T-cell (primary cell): ENCODE measurements at regions of chr3 and their contacts with region 1.

Region 1: DNA sequence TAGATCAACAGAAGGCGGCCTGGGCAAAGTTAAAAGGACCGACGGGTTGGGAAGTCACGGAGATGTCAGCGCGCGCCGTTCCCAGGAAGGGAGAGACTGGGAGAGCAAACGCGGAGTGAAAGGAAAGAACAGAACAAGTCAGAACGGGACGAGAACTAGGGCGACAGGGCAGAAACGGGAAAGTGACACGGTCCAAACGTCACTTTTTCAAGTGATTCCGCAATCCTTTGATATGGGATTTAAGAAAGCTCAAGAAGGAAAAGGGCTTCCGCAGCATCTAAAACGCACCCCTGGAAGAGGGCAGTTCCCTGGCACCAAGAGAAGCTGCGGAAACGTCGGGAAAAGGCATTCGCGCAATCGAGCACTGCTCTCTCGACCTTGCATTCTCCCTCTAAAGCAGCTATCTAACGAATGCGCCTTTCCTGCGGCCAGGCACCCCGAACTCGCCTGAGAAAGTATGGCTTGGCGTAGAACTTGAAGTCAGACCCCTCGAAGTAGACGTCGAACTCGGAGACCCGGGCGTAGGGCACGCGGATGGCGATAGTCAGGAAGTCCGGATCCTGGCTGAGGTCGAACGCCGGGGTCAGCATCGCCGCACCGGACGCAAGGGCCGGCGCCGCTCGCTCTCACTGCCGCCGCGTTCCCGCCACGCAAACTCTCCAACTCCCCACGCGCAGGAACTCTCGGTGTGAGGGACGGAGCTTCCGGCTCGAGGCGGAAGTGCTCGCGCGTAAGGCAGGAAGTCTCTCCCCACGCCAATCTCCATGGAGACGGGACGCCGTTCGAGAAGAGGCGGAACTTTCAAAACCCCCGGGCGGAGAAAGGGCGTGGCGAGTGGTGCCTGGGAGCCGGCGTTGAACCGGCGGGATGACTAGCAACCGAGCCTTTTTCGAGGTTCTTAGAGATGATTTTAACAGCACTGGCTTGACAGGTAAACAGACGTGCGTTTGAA is at the start of gene SHQ1:
- DNase-seq: peak; percentile 87 to 97 (median 92)
- ATAC-seq: peak; percentile 92 to 97 (median 96)
- H3K4me3 ChIP-seq: peak within 1 kb of the TSS; percentile 92 to 98
- H3K4me3 Mint-ChIP-seq: peak within 1 kb of the TSS; percentile 93 to 97 (median 95)
- H3K27ac ChIP-seq: peak within 1 kb of the TSS; percentile 52
- H3K27ac Mint-ChIP-seq: peak within 1 kb of the TSS; percentile 86 to 87
- H3K4me1 ChIP-seq: peaks cover 17 to 19% of the 10 kb centered on the region in 2 experiments
- H3K4me1 Mint-ChIP-seq: peaks cover 52 to 57% (median 54%) of the 10 kb centered on the region in 3 donors
- H3K27me3 ChIP-seq: no peaks in the 10 kb centered on the region
- H3K27me3 Mint-ChIP-seq: no peaks in the 10 kb centered on the region
- total RNA-seq, gene SHQ1: 16.6 to 29.0 (median 27.8) TPM

Region 2: DNA sequence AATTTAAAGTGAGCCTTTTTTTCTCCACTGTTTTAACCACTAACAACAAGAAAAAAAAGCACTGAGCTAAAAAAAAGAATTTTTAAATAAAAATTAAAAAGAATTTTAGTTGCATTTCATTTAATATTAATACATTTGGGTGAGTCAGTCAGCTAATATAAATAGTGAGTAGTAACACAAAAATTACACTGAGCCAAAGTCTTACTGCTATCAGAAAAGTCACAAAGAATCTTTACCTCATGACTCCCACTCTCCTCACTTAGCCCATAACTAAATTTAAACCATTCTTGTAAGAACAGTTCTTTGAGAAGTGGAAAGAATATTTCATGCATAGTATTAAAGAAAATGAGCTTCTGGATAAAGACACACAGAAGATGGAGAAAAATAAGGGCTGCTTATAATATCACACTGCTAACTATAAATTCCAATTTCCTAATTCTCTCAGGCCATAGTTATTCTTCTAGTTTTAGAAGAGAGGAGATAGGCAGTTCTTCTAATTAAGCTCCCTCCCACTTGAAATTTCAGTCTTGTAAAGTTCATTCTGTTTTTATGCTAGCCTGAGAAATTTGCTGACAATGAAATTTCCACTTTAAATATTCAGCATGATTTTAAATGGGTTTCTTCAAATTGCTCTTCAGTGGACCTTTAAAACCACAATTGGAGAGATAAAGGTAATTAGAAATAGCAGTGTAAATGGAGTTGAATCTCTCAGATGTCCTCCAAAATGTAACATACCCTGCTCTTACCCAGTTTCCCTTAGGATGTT is 17.4 kb before region 1 on chr3:
- CTCF ChIA-PET with region 1: interaction called in 1 of 2 experiments, 3 read pairs
- POLR2A ChIA-PET with region 1: interaction called in 1 of 2 experiments, 14 read pairs
- DNase-seq: no peak
- ATAC-seq: no peak
- H3K4me3 ChIP-seq: no peak overlapping the region
- H3K4me3 Mint-ChIP-seq: no peak overlapping the region
- H3K27ac ChIP-seq: no peak overlapping the region
- H3K27ac Mint-ChIP-seq: no peak overlapping the region
- H3K4me1 ChIP-seq: no peaks in the 10 kb centered on the region
- H3K4me1 Mint-ChIP-seq: peaks cover 0 to 4% (median 1%) of the 10 kb centered on the region in 3 donors
- H3K27me3 ChIP-seq: no peaks in the 10 kb centered on the region
- H3K27me3 Mint-ChIP-seq: no peaks in the 10 kb centered on the region

Region 3: GRCh38 chr3:73086071-73086494 is 238.1 kb after region 1 on chr3:
- CTCF ChIA-PET with region 1: interaction called, 11 to 23 read pairs
- POLR2A ChIA-PET with region 1: no interaction called
- DNase-seq: peak in 28 of 35 experiments; percentile 7 to 72 (median 36)
- ATAC-seq: peak; percentile 57 to 73 (median 66)
- H3K4me3 ChIP-seq: peak overlapping the region in 1 of 2 donors; percentile 17
- H3K4me3 Mint-ChIP-seq: peak overlapping the region in 2 of 3 donors; percentile 26 to 35
- H3K27ac ChIP-seq: no peak overlapping the region
- H3K27ac Mint-ChIP-seq: peak overlapping the region; percentile 9 to 23
- H3K4me1 ChIP-seq: no peaks in the 10 kb centered on the region
- H3K4me1 Mint-ChIP-seq: peaks cover 7 to 9% (median 8%) of the 10 kb centered on the region in 3 donors
- H3K27me3 ChIP-seq: peaks cover 0 to 2% of the 10 kb centered on the region in 2 experiments
- H3K27me3 Mint-ChIP-seq: no peaks in the 10 kb centered on the region